Naive thymus-derived CD4-positive, alpha-beta T cell (primary cell): ENCODE measurements at regions of chr10 and their contacts with region 1.

Region 1: GRCh38 chr10:70903262-70903921 is 15.0 kb upstream of the PCBD1 start:
- DNase-seq: peak in 1 of 9 donors; percentile 37
- ATAC-seq: no peak
- H3K4me3 ChIP-seq: no peak overlapping the region
- H3K4me3 Mint-ChIP-seq: no peak overlapping the region
- H3K27ac ChIP-seq: no peak overlapping the region
- H3K27ac Mint-ChIP-seq: no peak overlapping the region
- H3K4me1 ChIP-seq: no peaks in the 10 kb centered on the region
- H3K4me1 Mint-ChIP-seq: no peaks in the 10 kb centered on the region
- H3K27me3 ChIP-seq: no peaks in the 10 kb centered on the region
- H3K27me3 Mint-ChIP-seq: peaks cover 0 to 8% (median 0%) of the 10 kb centered on the region in 5 donors

Region 2: GRCh38 chr10:71191531-71192076 is 288.2 kb after region 1 on chr10:
- CTCF ChIA-PET with region 1: no interaction called
- POLR2A ChIA-PET with region 1: no interaction called
- intact Hi-C with region 1: no loop called
- DNase-seq: no peak
- ATAC-seq: no peak
- H3K4me3 ChIP-seq: no peak overlapping the region
- H3K4me3 Mint-ChIP-seq: no peak overlapping the region
- H3K27ac ChIP-seq: no peak overlapping the region
- H3K27ac Mint-ChIP-seq: no peak overlapping the region
- H3K4me1 ChIP-seq: no peaks in the 10 kb centered on the region
- H3K4me1 Mint-ChIP-seq: no peaks in the 10 kb centered on the region
- H3K27me3 ChIP-seq: no peaks in the 10 kb centered on the region
- H3K27me3 Mint-ChIP-seq: peaks cover 0 to 16% (median 5%) of the 10 kb centered on the region in 5 donors

Region 3: DNA sequence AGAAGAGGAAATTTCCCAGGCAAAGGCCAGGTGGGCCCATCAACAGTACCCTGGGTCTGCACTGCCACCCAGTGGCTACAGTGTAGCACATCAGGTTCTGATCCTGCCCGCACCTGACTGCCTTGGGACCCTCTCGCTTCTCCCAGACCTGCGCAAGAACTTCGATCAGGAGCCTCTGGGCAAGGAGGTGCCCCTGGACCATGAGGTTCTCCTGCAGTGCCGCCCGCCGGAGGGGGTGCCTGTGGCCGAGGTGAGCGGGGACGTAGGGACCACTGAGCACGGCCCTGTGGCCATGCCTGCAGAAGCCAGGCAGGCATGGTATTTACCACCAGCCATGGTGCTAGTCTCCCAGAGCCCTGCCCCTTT is 381.8 kb after region 1 on chr10:
- CTCF ChIA-PET with region 1: no interaction called
- POLR2A ChIA-PET with region 1: no interaction called
- intact Hi-C with region 1: loop called in 1 of 2 experiments (anchors 10 kb)
- DNase-seq: peak in 3 of 9 donors; percentile 7 to 17 (median 7)
- ATAC-seq: peak; percentile 61
- H3K4me3 ChIP-seq: no peak overlapping the region
- H3K4me3 Mint-ChIP-seq: no peak overlapping the region
- H3K27ac ChIP-seq: no peak overlapping the region
- H3K27ac Mint-ChIP-seq: no peak overlapping the region
- H3K4me1 ChIP-seq: no peaks in the 10 kb centered on the region
- H3K4me1 Mint-ChIP-seq: no peaks in the 10 kb centered on the region
- H3K27me3 ChIP-seq: no peaks in the 10 kb centered on the region
- H3K27me3 Mint-ChIP-seq: no peaks in the 10 kb centered on the region